Mammary epithelial cell (primary cell): ENCODE measurements at regions of chr13 and their contacts with region 1.

Region 1: DNA sequence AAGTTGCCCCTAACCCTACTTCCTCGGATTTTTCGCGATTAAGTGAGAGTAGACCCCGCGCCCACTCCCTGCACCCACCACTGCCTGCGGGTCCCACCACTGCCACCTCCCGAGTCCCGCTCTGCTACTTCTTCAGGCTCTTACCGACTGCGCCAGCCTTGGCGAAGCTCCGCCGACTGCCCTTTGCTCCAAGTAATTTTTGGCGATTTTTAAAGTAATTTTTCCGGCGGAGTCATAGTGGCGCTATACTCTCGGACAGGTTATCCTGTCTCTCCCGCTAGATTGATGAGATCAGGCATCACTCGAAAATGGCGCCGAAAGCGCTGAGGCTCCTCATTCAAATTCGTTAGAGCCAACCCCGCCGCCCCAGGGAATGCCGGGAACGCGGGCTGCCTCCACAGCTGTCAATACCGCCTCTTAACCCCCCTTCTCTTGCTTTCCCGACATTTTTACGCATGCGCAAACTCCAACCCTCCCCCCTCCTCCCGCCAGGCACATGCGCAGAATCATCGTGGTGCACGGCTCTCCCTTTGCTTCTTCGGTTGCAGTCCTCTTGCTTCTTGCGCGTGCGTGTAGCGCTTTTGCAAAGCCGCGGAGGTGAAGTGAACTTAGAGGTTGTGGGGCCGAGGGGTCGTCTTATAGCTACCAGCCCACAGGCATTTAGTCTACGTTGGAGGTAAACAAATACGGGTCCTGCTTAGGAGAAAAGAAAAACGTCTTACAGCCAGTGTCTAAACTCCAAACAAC is 66.6 kb downstream of the KCNRG start:
- DNase-seq: peak; percentile 99
- H3K4me3 ChIP-seq: peak overlapping the region; percentile 76 to 99 (median 92)
- H3K27ac ChIP-seq: peak overlapping the region; percentile 90
- H3K4me1 ChIP-seq: no peaks in the 10 kb centered on the region
- H3K27me3 ChIP-seq: no peaks in the 10 kb centered on the region
- CTCF ChIP-seq: peak in 1 of 2 donors; percentile 11

Region 2: GRCh38 chr13:49454388-49455006 is 627.4 kb before region 1 on chr13:
- CTCF ChIA-PET with region 1: no interaction called
- dilution Hi-C with region 1: no loop called
- in situ Hi-C with region 1: no loop called
- intact Hi-C with region 1: no loop called
- DNase-seq: no peak
- H3K4me3 ChIP-seq: no peak overlapping the region
- H3K27ac ChIP-seq: no peak overlapping the region
- H3K4me1 ChIP-seq: no peaks in the 10 kb centered on the region
- H3K27me3 ChIP-seq: no peaks in the 10 kb centered on the region
- CTCF ChIP-seq: no peak

Region 3: DNA sequence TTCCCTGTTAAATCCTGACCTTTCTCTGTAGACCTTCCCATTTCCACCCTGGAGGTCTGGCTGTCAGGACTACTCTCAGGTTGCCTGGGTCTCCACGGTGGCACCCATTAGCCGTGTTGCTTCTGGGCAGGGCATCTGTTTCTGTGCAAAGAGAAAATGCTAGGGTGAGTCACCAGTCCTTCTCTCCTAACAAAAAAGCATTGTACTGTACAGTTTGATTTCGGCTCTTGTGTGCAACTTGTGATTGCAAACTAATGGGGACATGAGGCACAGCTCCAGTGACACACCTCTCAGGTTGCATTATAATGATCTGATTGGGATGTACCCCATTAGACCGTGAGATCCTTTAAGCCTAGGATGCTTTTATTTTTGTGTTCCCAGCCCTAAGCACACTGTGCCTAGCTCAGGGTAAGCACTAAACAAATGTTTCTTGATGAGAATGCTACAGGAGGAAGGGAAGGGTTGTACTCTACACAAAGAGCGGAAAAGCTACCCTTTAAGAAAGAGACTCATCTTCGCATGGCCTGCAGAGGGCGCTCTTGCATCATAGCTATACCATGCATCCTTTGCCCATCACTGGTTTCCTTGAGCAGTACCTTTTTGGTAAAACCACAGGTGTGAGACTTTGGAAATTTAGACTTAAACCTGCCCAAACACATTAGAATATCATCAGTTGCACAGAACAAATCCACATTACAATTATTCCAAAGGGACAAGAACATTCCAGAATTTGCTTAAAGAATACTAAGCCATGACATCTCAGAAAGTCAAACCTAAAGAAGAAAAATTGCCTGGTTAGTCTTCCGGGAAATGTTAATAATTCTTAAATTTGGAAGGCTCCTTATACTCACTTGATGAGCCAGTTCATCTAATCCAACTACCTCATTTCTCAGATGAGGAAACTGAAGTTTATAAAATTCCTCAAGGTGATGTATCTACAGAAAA is 105.3 kb before region 1 on chr13:
- CTCF ChIA-PET with region 1: no interaction called
- dilution Hi-C with region 1: no loop called
- in situ Hi-C with region 1: no loop called
- intact Hi-C with region 1: loop called (anchors 1 kb)
- DNase-seq: peak; percentile 69
- H3K4me3 ChIP-seq: no peak overlapping the region
- H3K27ac ChIP-seq: peak overlapping the region; percentile 25
- H3K4me1 ChIP-seq: peaks cover 11% of the 10 kb centered on the region
- H3K27me3 ChIP-seq: no peaks in the 10 kb centered on the region
- CTCF ChIP-seq: peak; percentile 92 to 95

Region 4: GRCh38 chr13:50006426-50007135 is 75.3 kb before region 1 on chr13:
- CTCF ChIA-PET with region 1: no interaction called
- dilution Hi-C with region 1: no loop called
- in situ Hi-C with region 1: no loop called
- intact Hi-C with region 1: no loop called
- DNase-seq: no peak
- H3K4me3 ChIP-seq: no peak overlapping the region
- H3K27ac ChIP-seq: no peak overlapping the region
- H3K4me1 ChIP-seq: no peaks in the 10 kb centered on the region
- H3K27me3 ChIP-seq: no peaks in the 10 kb centered on the region
- CTCF ChIP-seq: no peak

Region 5: GRCh38 chr13:50123862-50124536 is 42.1 kb after region 1 on chr13:
- CTCF ChIA-PET with region 1: no interaction called
- dilution Hi-C with region 1: no loop called
- in situ Hi-C with region 1: no loop called
- intact Hi-C with region 1: loop called (anchors 1 kb)
- DNase-seq: peak; percentile 92
- H3K4me3 ChIP-seq: peak overlapping the region; percentile 73 to 97 (median 92)
- H3K27ac ChIP-seq: peak overlapping the region; percentile 80
- H3K4me1 ChIP-seq: peaks cover 16% of the 10 kb centered on the region
- H3K27me3 ChIP-seq: no peaks in the 10 kb centered on the region
- CTCF ChIP-seq: peak in 1 of 2 donors; percentile 18

Region 6: GRCh38 chr13:50268500-50268899 is 186.6 kb after region 1 on chr13:
- CTCF ChIA-PET with region 1: interaction called, 4 read pairs
- dilution Hi-C with region 1: no loop called
- in situ Hi-C with region 1: no loop called
- intact Hi-C with region 1: loop called (anchors 10 kb)
- DNase-seq: no peak
- H3K4me3 ChIP-seq: no peak overlapping the region
- H3K27ac ChIP-seq: no peak overlapping the region
- H3K4me1 ChIP-seq: no peaks in the 10 kb centered on the region
- H3K27me3 ChIP-seq: no peaks in the 10 kb centered on the region
- CTCF ChIP-seq: peak in 1 of 2 donors; percentile 10

Region 7: DNA sequence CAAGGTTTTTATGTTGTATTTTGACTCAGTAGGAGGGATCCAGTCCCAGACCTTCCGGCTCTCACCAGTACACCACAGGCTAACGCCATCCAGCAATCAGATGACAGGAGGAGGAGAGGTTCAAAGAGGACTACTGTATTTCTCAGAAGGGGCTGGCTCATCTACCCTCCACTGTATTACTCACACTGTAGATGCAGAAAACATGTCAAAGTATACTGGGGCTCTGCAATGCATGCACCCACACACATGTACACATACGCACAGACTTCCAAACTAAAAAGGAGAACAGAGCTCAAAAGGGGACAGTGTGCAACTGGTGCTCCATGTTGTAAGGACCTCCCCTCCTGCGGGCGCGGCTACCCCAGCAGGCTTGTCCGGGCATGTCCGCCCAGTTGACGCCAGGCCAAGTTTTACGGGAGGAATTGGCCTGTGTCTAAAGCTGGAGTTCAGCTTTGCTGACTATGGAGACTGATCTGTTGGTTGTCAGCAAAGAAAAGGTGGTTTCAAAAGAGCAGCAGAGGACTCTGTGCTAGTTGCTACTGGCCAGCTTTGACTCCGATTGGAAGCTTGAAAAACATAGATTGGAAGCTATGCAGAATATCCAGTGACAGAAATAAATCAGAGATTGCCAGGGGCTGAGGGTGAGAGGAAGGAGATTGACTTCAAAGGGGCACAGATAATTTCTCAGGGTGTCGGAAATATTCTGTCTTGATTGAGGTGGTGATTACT is 447.5 kb after region 1 on chr13:
- CTCF ChIA-PET with region 1: interaction called, 11 read pairs
- dilution Hi-C with region 1: no loop called
- in situ Hi-C with region 1: loop called in 1 of 2 experiments (anchors 25 kb)
- intact Hi-C with region 1: loop called (anchors 1 kb)
- DNase-seq: peak; percentile 86
- H3K4me3 ChIP-seq: no peak overlapping the region
- H3K27ac ChIP-seq: peak overlapping the region; percentile 54
- H3K4me1 ChIP-seq: peaks cover 18% of the 10 kb centered on the region
- H3K27me3 ChIP-seq: no peaks in the 10 kb centered on the region
- CTCF ChIP-seq: no peak